GM10248 (cell line): ENCODE measurements at regions of chr1 and their contacts with region 1.

Region 1: DNA sequence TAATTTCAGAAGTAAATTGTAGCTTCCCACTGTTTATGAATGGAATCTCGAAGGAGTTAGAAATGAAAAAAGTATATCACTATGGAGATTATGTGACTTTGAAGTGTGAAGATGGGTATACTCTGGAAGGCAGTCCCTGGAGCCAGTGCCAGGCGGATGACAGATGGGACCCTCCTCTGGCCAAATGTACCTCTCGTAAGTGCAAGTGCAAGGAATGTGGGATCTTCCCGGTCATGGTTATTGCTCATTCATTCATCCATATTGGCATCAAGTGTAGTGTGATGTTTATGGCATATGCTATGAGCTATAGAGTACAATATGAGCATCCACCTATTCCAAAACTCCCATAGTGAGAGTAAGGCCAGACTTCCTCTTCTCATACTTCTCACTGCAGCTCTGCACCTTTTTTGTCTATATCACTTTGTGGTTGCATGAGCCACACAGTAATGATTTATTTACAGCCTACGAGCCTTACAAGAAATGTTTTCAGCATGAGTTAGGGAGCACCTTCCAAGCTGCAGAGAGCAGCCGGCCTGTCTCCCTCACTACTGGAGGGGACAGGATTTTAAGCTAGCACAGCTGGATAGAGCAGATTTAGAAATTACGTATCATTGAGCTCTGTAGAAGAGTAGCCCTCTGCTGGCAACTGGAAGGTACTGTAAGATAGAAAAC is 24.9 kb upstream of the CR1L start:
- DNase-seq: peak; percentile 43
- CTCF ChIP-seq: peak; percentile 59

Region 2: DNA sequence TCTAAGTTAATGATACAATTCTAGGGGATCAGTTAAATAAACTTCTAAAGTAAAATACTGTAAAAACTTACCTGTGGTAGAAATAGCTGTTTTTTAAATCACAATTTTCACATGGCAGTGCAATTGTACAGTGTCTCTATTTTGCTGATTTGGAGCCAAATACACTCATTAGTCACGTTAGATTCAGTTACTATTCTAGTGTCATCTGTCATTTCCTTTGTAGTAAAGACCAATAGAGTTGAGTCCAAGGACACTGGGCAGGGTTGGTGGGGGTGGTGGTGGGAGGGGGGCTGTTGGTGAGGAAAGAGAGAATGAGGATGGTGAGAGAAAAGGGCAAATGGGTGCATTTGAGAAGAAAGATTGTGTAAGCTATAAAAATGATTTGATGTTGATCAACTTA is 264.9 kb before region 1 on chr1:
- CTCF ChIA-PET with region 1: no interaction called
- POLR2A ChIA-PET with region 1: no interaction called
- DNase-seq: no peak
- CTCF ChIP-seq: no peak

Region 3: GRCh38 chr1:207579436-207579799 is 40.6 kb before region 1 on chr1:
- CTCF ChIA-PET with region 1: interaction called, 11 read pairs
- POLR2A ChIA-PET with region 1: no interaction called
- DNase-seq: peak; percentile 30
- CTCF ChIP-seq: peak; percentile 47

Region 4: DNA sequence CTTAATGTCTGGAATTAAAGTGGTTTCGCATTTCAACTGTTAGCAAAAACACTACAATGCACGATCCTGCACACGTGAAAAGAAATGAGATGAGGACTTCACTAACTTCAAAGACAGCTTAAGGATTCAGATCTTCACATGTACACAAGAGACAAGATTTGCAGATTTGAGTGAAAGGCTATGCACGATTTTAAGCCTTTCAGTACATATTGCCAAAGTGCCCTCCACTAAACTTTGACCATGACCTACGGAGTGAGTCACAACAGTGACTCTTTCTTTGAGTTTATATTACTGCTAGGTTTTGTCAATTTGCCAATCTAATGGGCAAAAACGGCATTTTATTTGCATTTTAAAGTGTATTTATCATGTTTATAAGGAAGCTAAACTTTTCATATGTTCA is 16.2 kb before region 1 on chr1:
- CTCF ChIA-PET with region 1: interaction called, 12 read pairs
- POLR2A ChIA-PET with region 1: no interaction called
- DNase-seq: no peak
- CTCF ChIP-seq: no peak

Region 5: GRCh38 chr1:207644852-207645634 is 25.0 kb after region 1 on chr1 and contains the start of gene CR1L:
- CTCF ChIA-PET with region 1: interaction called, 13 read pairs
- POLR2A ChIA-PET with region 1: no interaction called
- DNase-seq: peak; percentile 81
- CTCF ChIP-seq: no peak

Region 6: DNA sequence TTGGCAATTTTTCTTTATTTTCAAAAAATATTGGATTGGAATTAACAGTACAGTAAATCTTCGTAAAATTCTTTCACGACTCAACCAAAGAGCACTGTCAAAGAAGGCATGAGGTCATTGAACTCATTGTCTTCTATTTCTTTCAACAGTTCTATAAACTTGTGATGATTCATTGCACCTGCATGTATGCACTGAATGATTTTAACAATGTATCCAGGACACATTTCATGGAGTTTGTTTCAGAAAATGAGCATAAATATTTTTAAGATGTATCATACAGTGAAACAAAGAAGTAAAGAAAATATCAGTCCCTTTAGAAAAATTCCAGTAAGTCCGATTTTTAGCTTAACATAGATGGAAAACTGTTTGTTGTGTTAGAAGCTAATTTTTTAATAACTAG is 324.6 kb after region 1 on chr1:
- CTCF ChIA-PET with region 1: no interaction called
- POLR2A ChIA-PET with region 1: no interaction called
- DNase-seq: no peak
- CTCF ChIP-seq: no peak